ENCODE measurements at regions of chr17 and their contacts with region 1.

Region 1: GRCh38 chr17:47941236-47941994 is at the start of gene PNPO:
- DNase-seq: peak; percentile 99
- ATAC-seq: peak; percentile 99
- H3K4me3 Mint-ChIP-seq: peak within 1 kb of the TSS; percentile 85
- H3K27ac Mint-ChIP-seq: peak within 1 kb of the TSS; percentile 90
- H3K4me1 Mint-ChIP-seq: peaks cover 52% of the 10 kb centered on the region
- H3K27me3 Mint-ChIP-seq: no peaks in the 10 kb centered on the region
- total RNA-seq, gene PNPO: 37.9 to 44.0 TPM

Region 2: DNA sequence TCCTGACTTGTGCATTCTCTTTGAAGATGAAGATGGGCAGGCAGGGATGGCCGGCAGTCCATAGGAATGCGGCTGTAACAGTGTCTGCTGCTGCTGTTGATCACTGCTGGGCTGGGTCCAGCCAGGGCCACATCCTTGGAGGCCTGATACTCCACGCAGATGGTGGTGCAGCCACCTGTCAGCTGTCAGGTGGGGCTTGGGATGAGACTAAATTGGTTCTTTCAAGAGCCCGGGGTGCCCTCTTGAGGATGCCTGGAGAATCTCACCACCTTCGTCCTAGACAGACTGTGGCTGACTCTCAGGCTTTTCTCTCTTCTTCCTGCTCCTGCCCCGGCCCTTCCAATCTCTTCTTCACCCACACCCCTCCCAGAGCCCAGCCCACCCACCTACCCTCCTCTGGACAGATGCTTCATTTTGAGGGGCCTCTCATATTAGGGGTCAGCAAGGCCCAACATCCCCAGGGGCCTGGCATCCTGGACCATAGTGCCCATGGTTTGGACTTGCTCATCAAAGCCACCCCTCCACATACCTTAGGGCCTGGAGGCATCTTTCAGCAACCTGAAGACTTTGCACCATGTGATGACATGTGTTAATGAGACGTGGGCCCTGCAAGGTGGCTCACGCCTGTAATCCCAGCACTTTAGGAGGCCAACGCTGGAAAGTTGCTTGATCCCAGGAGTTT is 138.9 kb before region 1 on chr17:
- CTCF ChIA-PET with region 1: no interaction called
- POLR2A ChIA-PET with region 1: no interaction called
- DNase-seq: peak; percentile 76
- ATAC-seq: peak; percentile 91
- H3K4me3 Mint-ChIP-seq: no peak overlapping the region
- H3K27ac Mint-ChIP-seq: no peak overlapping the region
- H3K4me1 Mint-ChIP-seq: no peaks in the 10 kb centered on the region
- H3K27me3 Mint-ChIP-seq: peaks cover 3% of the 10 kb centered on the region

Region 3: GRCh38 chr17:47831003-47831933 is 110.1 kb before region 1 on chr17 and contains the starts of genes LRRC46 and MRPL10:
- CTCF ChIA-PET with region 1: interaction called, 6 read pairs
- POLR2A ChIA-PET with region 1: interaction called, 12 read pairs
- DNase-seq: peak; percentile 95
- ATAC-seq: peak; percentile 90
- H3K4me3 Mint-ChIP-seq: peak within 1 kb of the TSS; percentile 84
- H3K27ac Mint-ChIP-seq: peak within 1 kb of the TSS; percentile 92
- H3K4me1 Mint-ChIP-seq: peaks cover 50% of the 10 kb centered on the region
- H3K27me3 Mint-ChIP-seq: no peaks in the 10 kb centered on the region
- total RNA-seq, gene LRRC46: 0.82 to 0.97 TPM
- total RNA-seq, gene MRPL10: 37.9 to 41.6 TPM

Region 4: DNA sequence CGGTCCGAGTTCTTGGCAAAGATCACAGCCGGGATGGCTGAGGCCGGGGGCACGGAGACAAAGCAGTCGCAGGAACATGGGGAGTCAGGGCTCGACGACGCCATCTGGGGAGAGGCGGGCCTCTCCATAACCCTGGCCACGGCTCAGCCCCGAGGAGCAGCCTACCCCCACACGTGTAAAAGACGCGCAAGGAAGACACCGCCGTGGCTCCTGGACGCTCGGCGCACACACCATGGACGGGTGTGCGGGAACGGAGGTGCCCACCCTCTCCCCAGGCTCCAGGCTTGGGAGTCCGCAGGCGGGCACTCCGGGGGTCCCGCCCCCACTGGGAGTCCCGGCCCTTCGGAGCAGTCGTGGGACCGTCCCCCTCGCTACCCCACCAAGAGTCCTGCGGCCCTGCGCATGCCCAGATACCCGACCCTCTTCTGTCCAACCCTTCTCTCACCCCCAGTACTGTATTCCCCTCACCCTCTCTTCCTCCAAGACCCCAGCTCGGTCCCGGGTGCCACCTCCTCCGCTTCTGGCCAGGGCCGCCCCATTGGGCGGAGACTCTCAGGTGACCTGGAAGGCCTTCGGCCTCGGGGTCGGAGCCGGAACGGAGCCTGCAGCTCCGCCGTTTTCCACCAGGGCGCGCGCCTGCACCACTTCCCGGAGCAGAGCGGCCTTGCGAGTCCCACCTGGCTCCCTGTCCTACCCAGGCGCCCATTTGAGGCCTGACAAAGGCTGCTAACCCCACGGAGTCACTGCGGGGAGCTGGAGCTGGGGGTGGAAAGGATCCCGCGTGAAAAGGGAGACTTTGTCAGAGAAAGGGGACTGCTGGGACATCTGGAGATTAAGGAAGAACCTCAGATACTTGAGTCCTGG is 100.4 kb before region 1 on chr17 and contains the start of gene SCRN2:
- CTCF ChIA-PET with region 1: interaction called, 19 read pairs
- POLR2A ChIA-PET with region 1: interaction called, 3 read pairs
- DNase-seq: peak; percentile 91
- ATAC-seq: peak; percentile 92
- H3K4me3 Mint-ChIP-seq: peak within 1 kb of the TSS; percentile 99
- H3K27ac Mint-ChIP-seq: peak within 1 kb of the TSS; percentile 95
- H3K4me1 Mint-ChIP-seq: peaks cover 30% of the 10 kb centered on the region
- H3K27me3 Mint-ChIP-seq: peaks cover 16% of the 10 kb centered on the region
- total RNA-seq, gene SCRN2: 24.1 to 24.8 TPM

Region 5: GRCh38 chr17:47889734-47890529 is 51.5 kb before region 1 on chr17:
- CTCF ChIA-PET with region 1: interaction called, 10 read pairs
- POLR2A ChIA-PET with region 1: interaction called, 18 read pairs
- DNase-seq: peak; percentile 94
- ATAC-seq: peak; percentile 97
- H3K4me3 Mint-ChIP-seq: no peak overlapping the region
- H3K27ac Mint-ChIP-seq: peak overlapping the region; percentile 39
- H3K4me1 Mint-ChIP-seq: peaks cover 33% of the 10 kb centered on the region
- H3K27me3 Mint-ChIP-seq: no peaks in the 10 kb centered on the region

Region 6: GRCh38 chr17:47895856-47896671 is 45.4 kb before region 1 on chr17 and contains the start of gene SP2:
- CTCF ChIA-PET with region 1: interaction called, 10 read pairs
- POLR2A ChIA-PET with region 1: interaction called, 18 read pairs
- DNase-seq: peak; percentile 100
- ATAC-seq: peak; percentile 96
- H3K4me3 Mint-ChIP-seq: peak within 1 kb of the TSS; percentile 97
- H3K27ac Mint-ChIP-seq: peak within 1 kb of the TSS; percentile 95
- H3K4me1 Mint-ChIP-seq: peaks cover 44% of the 10 kb centered on the region
- H3K27me3 Mint-ChIP-seq: no peaks in the 10 kb centered on the region
- total RNA-seq, gene SP2: 23.7 to 24.5 TPM

Region 7: GRCh38 chr17:47907932-47908562 is 33.4 kb before region 1 on chr17:
- CTCF ChIA-PET with region 1: no interaction called
- POLR2A ChIA-PET with region 1: no interaction called
- DNase-seq: no peak
- ATAC-seq: no peak
- H3K4me3 Mint-ChIP-seq: no peak overlapping the region
- H3K27ac Mint-ChIP-seq: peak overlapping the region; percentile 43
- H3K4me1 Mint-ChIP-seq: peaks cover 24% of the 10 kb centered on the region
- H3K27me3 Mint-ChIP-seq: no peaks in the 10 kb centered on the region

Region 8: GRCh38 chr17:47957591-47958428 is 16.4 kb after region 1 on chr17 and contains the start of gene PRR15L:
- CTCF ChIA-PET with region 1: interaction called, 44 read pairs
- POLR2A ChIA-PET with region 1: interaction called, 5 read pairs
- DNase-seq: no peak
- ATAC-seq: no peak
- H3K4me3 Mint-ChIP-seq: no peak within 1 kb of the TSS
- H3K27ac Mint-ChIP-seq: no peak within 1 kb of the TSS
- H3K4me1 Mint-ChIP-seq: no peaks in the 10 kb centered on the region
- H3K27me3 Mint-ChIP-seq: no peaks in the 10 kb centered on the region
- total RNA-seq, gene PRR15L: not detected

Measured in activated CD8-positive, alpha-beta T cell treated with anti-CD3 and anti-CD28 coated beads, Interleukin-2, amount 10 ng/mL, durations not matched to agents 7 days and 5 days (primary cell).